ENCODE measurements at regions of chr22 and their contacts with region 1.

Region 1: DNA sequence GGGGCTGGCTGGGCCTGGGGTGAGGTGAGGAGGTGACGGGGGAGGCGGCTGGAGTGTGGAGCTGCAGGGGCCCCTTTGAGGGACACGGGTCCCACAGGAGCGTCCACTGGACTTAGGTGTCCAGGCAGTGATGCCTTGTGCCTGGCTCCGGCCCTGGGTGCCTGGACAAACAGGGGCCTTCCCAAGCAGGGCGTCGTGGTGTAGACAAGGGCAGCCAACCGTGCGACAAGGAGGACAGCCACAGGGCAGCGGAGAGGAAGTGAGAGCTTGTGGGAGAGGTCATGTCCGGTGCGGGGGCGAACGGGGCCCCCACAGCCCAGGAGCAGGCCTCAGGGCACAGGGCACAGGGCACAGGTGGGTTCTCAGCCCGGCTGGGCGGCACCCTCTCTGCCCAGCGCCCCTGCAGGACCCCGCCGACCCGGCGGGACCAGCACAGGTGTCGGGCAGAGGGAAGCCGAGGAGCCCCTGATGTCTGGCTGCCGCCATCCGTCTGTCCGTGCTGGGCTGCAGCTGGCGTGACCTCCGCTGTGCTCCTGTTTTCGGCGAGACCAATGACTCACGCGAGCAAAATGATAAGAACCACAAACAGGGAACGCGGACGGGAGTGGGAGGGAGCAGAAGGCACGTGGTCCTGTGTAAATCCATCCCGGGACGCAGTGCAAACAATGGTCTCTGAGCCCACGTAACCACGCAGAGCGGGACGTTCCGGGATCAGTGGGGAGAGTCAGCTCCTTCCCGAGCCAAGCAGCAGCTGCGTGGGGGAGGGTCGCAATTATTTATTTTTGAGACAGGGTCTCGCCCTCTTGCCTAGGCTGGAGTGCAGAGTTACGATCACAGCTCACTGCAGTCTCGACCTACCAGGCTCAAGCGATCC is 49.1 kb upstream of the A4GALT start:
- DNase-seq: peak; percentile 79 to 89
- ATAC-seq: peak; percentile 74
- H3K4me3 ChIP-seq: no peak overlapping the region
- H3K27ac ChIP-seq: no peak overlapping the region
- H3K4me1 ChIP-seq: no peaks in the 10 kb centered on the region
- H3K27me3 ChIP-seq: no peaks in the 10 kb centered on the region

Region 2: GRCh38 chr22:42814215-42814614 is 44.4 kb after region 1 on chr22:
- intact Hi-C with region 1: loop called in 1 of 2 experiments (anchors 10 kb)
- DNase-seq: no peak
- ATAC-seq: no peak
- H3K4me3 ChIP-seq: no peak overlapping the region
- H3K27ac ChIP-seq: no peak overlapping the region
- H3K4me1 ChIP-seq: no peaks in the 10 kb centered on the region
- H3K27me3 ChIP-seq: no peaks in the 10 kb centered on the region

Region 3: GRCh38 chr22:43036282-43036829 is 266.5 kb after region 1 on chr22:
- intact Hi-C with region 1: loop called in 1 of 2 experiments (anchors 10 kb)
- DNase-seq: peak; percentile 70 to 88
- ATAC-seq: peak; percentile 77
- H3K4me3 ChIP-seq: no peak overlapping the region
- H3K27ac ChIP-seq: no peak overlapping the region
- H3K4me1 ChIP-seq: no peaks in the 10 kb centered on the region
- H3K27me3 ChIP-seq: no peaks in the 10 kb centered on the region

Region 4: GRCh38 chr22:43088979-43089717 is 319.3 kb after region 1 on chr22 and contains the start of gene TTLL1:
- intact Hi-C with region 1: no loop called
- DNase-seq: peak; percentile 93 to 95
- ATAC-seq: peak; percentile 95
- H3K4me3 ChIP-seq: peak within 1 kb of the TSS; percentile 69 to 72
- H3K27ac ChIP-seq: no peak within 1 kb of the TSS
- H3K4me1 ChIP-seq: no peaks in the 10 kb centered on the region
- H3K27me3 ChIP-seq: no peaks in the 10 kb centered on the region
- total RNA-seq, gene TTLL1: 3.0 to 5.9 TPM

Measured in aorta (tissue), 5 donors.